Panc1 (cell line): ENCODE measurements at regions of chr12 and their contacts with region 1.

Region 1: DNA sequence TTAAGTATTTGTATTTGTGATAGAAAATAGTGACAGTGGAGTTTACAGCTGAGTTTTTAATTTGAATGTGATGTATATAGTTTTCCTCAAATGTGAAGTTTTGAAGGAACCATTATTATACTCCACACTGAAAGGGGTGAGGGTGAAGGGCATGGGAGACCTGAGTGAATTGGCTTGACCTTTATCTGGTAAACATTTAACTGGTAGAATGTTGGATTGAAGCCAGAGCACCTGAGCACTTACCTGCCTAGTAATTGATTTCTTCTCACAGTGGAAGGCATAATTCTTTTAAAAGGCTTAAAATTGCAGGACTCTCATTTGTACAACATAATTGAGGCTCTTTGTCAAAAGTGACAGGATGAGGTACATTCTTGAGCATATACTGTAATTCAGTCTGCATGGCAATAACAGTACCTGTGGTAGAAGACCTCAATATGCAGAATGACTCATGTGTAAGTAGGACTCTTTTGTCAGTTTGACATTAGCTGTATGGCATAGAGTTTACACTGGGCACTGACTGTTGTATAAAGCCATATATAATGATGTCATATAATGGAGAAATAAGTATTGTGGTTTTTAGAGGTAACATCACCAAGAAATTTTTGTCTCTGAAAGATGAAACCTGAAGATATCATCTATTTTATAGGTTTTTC is 309.6 kb downstream of the TMTC2 start:
- DNase-seq: no peak
- ATAC-seq: no peak
- H3K4me3 ChIP-seq: no peak overlapping the region
- H3K27ac ChIP-seq: no peak overlapping the region
- H3K4me1 ChIP-seq: no peaks in the 10 kb centered on the region
- H3K27me3 ChIP-seq: no peaks in the 10 kb centered on the region
- CTCF ChIP-seq: no peak

Region 2: DNA sequence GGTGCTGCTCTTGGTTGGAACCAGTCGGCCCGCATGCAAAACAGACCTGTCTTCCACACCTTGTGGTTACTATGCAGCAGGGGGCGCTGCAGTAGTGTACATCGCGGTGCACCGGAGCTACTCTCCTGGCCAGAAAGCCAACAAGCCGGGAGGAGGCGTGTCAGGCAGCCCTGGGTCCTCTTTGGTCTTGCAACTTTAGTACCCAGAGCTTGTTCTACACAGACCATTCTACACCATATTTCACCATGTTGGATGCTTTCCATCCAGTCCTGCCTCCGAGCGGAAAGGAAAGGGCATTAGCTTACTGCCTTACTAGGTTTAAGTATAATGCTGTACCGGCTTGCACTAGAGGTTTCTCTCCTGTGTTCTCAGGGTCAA is 310.5 kb before region 1 on chr12:
- CTCF ChIA-PET with region 1: no interaction called
- POLR2A ChIA-PET with region 1: no interaction called
- in situ Hi-C with region 1: no loop called
- intact Hi-C with region 1: loop called (anchors 5 kb)
- DNase-seq: peak; percentile 59
- ATAC-seq: peak; percentile 89
- H3K4me3 ChIP-seq: peak overlapping the region; percentile 73 to 86
- H3K27ac ChIP-seq: no peak overlapping the region; the same call in 1 of the 2 replicates
- H3K4me1 ChIP-seq: no peaks in the 10 kb centered on the region
- H3K27me3 ChIP-seq: peaks cover 6% of the 10 kb centered on the region
- CTCF ChIP-seq: peak; percentile 85

Region 3: DNA sequence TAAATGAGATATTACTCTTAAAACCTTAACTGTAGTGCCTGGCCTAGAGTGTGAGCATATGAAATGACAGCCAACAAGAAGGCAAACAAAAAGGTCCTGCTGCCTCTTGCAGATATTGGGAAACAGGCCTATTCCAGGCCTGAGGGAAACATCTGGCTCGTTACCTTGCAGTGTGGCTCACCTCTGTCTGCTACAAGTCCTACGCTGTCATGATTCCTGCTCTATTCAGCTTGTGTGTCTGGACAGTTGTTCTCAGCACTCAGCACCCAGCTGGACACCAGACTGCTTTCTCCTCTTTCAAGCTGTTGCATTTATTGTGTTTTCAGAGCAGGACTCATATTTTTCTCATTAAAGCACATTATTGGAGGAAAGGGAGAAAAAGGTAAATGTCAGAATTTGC is 196.1 kb before region 1 on chr12:
- CTCF ChIA-PET with region 1: no interaction called
- POLR2A ChIA-PET with region 1: no interaction called
- in situ Hi-C with region 1: no loop called
- intact Hi-C with region 1: no loop called
- DNase-seq: no peak
- ATAC-seq: no peak
- H3K4me3 ChIP-seq: no peak overlapping the region
- H3K27ac ChIP-seq: no peak overlapping the region
- H3K4me1 ChIP-seq: no peaks in the 10 kb centered on the region
- H3K27me3 ChIP-seq: no peaks in the 10 kb centered on the region
- CTCF ChIP-seq: no peak

Region 4: DNA sequence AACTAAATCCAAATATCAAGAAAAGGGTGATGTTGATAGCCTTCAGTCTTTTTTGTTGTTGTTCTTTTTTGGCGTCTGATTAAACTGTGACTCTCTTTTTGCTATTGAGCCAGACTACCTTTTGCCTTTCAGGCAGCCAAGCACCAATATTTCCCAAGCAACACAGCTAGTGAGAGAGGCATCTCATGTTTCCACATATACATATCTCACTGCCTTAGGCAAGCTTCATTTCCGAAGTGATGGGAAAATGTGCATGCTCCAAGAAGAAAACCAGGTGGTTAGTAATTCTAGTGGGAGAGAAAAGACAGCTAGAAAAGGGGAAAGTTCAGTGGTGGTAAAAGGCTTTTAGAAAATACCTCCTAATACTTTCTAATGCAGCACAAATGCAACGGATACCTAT is 31.8 kb before region 1 on chr12:
- CTCF ChIA-PET with region 1: no interaction called
- POLR2A ChIA-PET with region 1: no interaction called
- in situ Hi-C with region 1: no loop called
- intact Hi-C with region 1: no loop called
- DNase-seq: no peak
- ATAC-seq: no peak
- H3K4me3 ChIP-seq: no peak overlapping the region
- H3K27ac ChIP-seq: no peak overlapping the region
- H3K4me1 ChIP-seq: no peaks in the 10 kb centered on the region
- H3K27me3 ChIP-seq: no peaks in the 10 kb centered on the region
- CTCF ChIP-seq: no peak